Calu3 (cell line): ENCODE measurements at regions of chr10 and their contacts with region 1.

Region 1: DNA sequence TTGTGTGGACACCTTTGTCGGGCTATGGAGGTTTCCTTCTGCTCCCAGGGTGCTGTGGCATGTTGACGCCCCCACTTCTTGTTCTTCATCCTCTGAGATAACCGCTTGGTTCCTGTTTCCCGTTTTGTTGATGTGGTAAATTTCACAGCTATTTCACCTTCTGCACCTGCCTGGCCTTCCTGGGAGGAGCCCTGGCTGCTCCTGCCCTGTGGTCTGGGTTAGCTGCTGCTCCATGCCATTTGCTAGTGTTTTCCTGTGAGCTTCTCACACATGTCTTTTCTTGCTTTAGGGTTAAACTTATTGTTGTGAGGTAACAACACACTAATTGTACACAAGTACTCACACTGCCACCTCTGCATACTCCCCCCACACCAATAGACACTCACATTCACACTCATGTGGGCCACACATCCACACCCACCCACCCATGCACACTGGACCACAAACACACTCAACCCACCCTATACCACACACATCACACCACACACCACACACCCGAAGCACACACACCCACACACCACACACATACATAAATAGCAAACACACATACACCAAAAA is 46.5 kb upstream of the MSMB start:
- DNase-seq: no peak
- H3K4me3 Mint-ChIP-seq: no peak overlapping the region
- H3K27ac Mint-ChIP-seq: no peak overlapping the region
- H3K4me1 Mint-ChIP-seq: no peaks in the 10 kb centered on the region
- H3K27me3 Mint-ChIP-seq: peaks cover 13% of the 10 kb centered on the region
- CTCF ChIP-seq: no peak

Region 2: GRCh38 chr10:46104051-46104730 is 11.6 kb after region 1 on chr10:
- CTCF ChIA-PET with region 1: no interaction called
- intact Hi-C with region 1: loop called (anchors 2 kb)
- DNase-seq: no peak
- H3K4me3 Mint-ChIP-seq: no peak overlapping the region
- H3K27ac Mint-ChIP-seq: no peak overlapping the region
- H3K4me1 Mint-ChIP-seq: peaks cover 10% of the 10 kb centered on the region
- H3K27me3 Mint-ChIP-seq: peaks cover 44% of the 10 kb centered on the region
- CTCF ChIP-seq: no peak

Region 3: DNA sequence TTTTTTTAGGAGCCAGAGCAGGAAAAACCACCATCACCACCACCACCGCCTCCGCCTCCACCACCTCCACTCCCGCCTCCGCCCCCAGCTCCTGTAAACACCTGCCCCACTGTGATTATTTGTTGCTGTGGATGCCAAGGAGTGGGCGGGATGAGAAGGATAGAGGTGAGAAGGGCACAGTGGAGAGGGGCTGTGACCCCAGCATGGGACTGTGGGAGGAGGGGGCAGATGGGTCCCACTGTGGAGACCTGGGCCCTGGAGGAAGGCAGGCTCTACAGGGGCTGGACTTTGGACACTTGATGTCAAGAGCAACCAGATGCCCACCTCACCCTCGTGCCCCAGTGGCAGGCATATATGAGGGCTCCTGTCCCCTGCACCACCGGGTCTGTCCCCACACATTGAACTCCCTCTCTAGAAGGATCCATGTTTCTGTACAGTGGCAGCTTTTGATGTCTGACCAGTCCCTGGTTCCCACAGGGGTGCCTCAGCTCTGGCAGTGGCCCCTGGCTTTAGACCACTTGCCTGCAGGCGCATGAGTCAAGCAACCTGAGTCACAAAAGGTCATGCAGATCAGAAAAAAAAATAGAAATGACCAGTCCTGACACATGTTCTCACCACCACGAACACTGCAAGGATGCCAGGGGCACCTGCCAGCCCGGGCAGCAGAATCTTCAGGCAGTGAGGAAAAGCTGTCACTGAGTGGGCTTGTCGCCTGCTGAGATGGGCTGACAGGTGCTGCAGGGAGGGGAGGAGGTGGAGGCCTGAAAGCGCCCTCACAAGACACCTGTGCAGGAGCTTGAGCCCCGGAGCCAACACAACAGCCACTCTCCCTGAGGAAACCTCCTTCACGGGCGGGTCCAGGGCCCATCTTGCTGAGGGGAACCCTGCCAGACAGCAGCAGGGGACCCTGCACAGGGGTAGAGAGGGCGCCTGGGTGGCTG is 219.2 kb after region 1 on chr10:
- CTCF ChIA-PET with region 1: no interaction called
- intact Hi-C with region 1: no loop called
- DNase-seq: peak; percentile 52
- H3K4me3 Mint-ChIP-seq: no peak overlapping the region
- H3K27ac Mint-ChIP-seq: no peak overlapping the region
- H3K4me1 Mint-ChIP-seq: peaks cover 39% of the 10 kb centered on the region
- H3K27me3 Mint-ChIP-seq: peaks cover 15% of the 10 kb centered on the region
- CTCF ChIP-seq: no peak